Activated CD4-positive, alpha-beta memory T cell treated with anti-CD3 and anti-CD28 coated beads, Interleukin-2, amount 10 ng/mL, durations not matched to agents 7 days and 5 days (primary cell): ENCODE measurements at regions of chr22 and their contacts with region 1.

Region 1: GRCh38 chr22:30089655-30089974 is 9.4 kb downstream of the HORMAD2 start:
- DNase-seq: no peak
- H3K4me3 Mint-ChIP-seq: no peak overlapping the region
- H3K27ac Mint-ChIP-seq: no peak overlapping the region
- H3K4me1 Mint-ChIP-seq: peaks cover 28% of the 10 kb centered on the region
- H3K27me3 Mint-ChIP-seq: peaks cover 4% of the 10 kb centered on the region

Region 2: GRCh38 chr22:29625090-29625825 is 464.4 kb before region 1 on chr22:
- CTCF ChIA-PET with region 1: interaction called, 16 read pairs
- POLR2A ChIA-PET with region 1: no interaction called
- DNase-seq: peak; percentile 53
- H3K4me3 Mint-ChIP-seq: no peak overlapping the region
- H3K27ac Mint-ChIP-seq: peak overlapping the region; percentile 16
- H3K4me1 Mint-ChIP-seq: peaks cover 59% of the 10 kb centered on the region
- H3K27me3 Mint-ChIP-seq: no peaks in the 10 kb centered on the region

Region 3: GRCh38 chr22:29635734-29636357 is 453.8 kb before region 1 on chr22:
- CTCF ChIA-PET with region 1: interaction called, 15 read pairs
- POLR2A ChIA-PET with region 1: no interaction called
- DNase-seq: no peak
- H3K4me3 Mint-ChIP-seq: no peak overlapping the region
- H3K27ac Mint-ChIP-seq: no peak overlapping the region
- H3K4me1 Mint-ChIP-seq: peaks cover 37% of the 10 kb centered on the region
- H3K27me3 Mint-ChIP-seq: no peaks in the 10 kb centered on the region

Region 4: DNA sequence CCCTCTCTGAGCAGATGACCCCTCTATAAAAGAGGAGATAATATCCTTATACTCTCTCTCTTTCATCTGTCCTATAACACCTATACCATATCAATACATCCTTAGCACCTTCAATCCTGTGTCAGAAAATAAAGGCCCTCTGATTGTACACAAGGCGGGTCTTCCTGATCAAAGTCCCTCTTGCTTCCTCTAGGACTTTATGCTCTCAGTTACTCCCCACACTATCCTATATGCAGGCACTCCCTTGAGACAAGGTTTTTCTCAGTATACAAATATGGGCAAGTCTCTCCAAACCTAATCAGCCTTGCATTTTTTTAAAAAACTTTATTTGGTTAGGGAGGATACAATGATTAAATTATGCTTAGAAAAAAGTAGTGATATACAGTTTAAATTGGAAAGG is 26.7 kb before region 1 on chr22:
- CTCF ChIA-PET with region 1: no interaction called
- POLR2A ChIA-PET with region 1: no interaction called
- DNase-seq: no peak
- H3K4me3 Mint-ChIP-seq: no peak overlapping the region
- H3K27ac Mint-ChIP-seq: no peak overlapping the region
- H3K4me1 Mint-ChIP-seq: no peaks in the 10 kb centered on the region
- H3K27me3 Mint-ChIP-seq: peaks cover 36% of the 10 kb centered on the region

Region 5: DNA sequence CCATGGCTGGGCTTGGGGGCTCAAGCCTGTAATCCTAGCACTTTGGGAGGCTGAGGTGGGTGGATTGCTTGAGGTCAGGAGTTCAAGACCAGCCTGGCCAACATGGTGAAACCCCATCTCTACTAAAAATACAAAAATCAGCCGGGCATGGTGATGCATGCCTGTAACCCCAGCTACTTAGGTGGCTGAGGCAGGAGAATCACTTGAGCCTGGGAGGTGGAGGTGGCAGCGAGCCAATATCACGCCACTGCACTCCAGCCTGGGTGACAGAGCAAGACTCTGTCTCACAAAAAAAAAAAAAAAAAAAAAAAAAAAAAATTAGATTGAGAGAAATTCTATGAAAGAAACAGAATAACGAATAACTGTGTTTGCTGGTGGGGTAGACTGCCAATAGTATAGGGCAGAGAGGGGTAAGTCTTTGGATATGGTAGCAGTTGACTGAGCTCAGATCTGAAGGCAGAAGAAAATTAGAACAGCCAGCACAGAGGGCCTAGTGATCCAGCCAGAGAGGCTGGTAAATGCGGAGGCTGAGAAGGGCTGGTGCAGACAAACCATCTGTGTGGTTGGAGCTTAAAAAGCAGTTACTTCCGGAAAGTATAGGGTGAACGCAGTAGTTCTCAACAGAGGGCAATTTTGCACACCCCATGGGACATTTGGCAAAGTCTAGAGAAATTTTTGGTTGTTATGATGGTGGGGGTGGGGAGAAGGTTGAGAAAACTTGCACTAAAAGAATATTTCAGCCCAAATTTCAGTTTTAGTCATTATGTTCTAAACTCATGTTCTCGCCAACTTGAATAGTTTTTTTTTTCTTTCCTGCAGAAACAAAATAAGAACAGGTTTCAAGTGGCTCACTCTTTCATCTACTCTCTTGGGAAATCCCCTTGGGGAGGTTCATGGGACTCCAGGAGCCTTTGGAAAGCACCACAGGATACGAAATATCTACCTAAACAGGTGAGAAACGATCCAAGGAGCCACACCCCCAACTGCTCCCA is 11.0 kb before region 1 on chr22:
- CTCF ChIA-PET with region 1: interaction called, 13 read pairs
- POLR2A ChIA-PET with region 1: interaction called, 3 read pairs
- DNase-seq: peak; percentile 55
- H3K4me3 Mint-ChIP-seq: peak overlapping the region; percentile 35
- H3K27ac Mint-ChIP-seq: peak overlapping the region; percentile 80
- H3K4me1 Mint-ChIP-seq: peaks cover 11% of the 10 kb centered on the region
- H3K27me3 Mint-ChIP-seq: peaks cover 7% of the 10 kb centered on the region

Region 6: GRCh38 chr22:30187529-30188407 is 98.2 kb after region 1 on chr22:
- CTCF ChIA-PET with region 1: no interaction called
- POLR2A ChIA-PET with region 1: no interaction called
- DNase-seq: peak; percentile 38
- H3K4me3 Mint-ChIP-seq: peak overlapping the region; percentile 2
- H3K27ac Mint-ChIP-seq: peak overlapping the region; percentile 89
- H3K4me1 Mint-ChIP-seq: peaks cover 96% of the 10 kb centered on the region
- H3K27me3 Mint-ChIP-seq: no peaks in the 10 kb centered on the region

Region 7: DNA sequence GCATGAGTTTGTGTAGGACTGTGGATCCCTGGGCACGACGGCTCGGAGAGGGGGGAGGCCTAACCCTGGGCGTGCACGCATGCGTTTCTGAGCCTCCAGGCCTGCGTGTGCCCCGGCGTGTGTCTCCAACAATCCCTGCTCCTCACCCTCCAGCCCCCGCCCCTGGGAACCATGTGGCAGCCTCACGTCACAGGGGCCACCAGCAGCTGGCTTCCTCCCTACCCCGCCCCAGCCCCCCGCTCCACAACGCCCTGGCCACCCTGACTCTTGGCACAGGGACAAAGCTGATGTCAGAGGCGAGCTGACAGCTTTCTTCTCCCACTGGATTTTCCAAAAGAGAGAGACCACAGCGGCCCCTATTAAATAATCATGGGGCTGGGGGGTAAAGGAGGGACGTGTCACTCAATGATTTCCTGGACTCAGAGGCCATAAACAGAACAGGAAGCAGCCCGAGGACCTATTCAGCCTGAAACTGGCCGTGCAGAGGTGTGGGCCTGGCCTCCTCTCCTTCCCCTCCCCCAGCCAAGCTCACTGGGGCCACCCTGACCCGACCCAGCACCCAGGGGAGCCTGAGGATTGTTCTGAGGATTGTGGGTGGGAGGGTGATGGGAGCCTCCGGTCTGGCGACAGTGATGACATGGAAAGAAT is 163.7 kb after region 1 on chr22:
- CTCF ChIA-PET with region 1: interaction called, 14 read pairs
- POLR2A ChIA-PET with region 1: no interaction called
- DNase-seq: no peak
- H3K4me3 Mint-ChIP-seq: no peak overlapping the region
- H3K27ac Mint-ChIP-seq: no peak overlapping the region
- H3K4me1 Mint-ChIP-seq: peaks cover 63% of the 10 kb centered on the region
- H3K27me3 Mint-ChIP-seq: no peaks in the 10 kb centered on the region